ENCODE measurements at regions of chr10 and their contacts with region 1.

Region 1: GRCh38 chr10:79301754-79302530 is 45.3 kb upstream of the PPIF start:
- DNase-seq: no peak
- H3K4me3 ChIP-seq: no peak overlapping the region
- H3K27me3 ChIP-seq: no peaks in the 10 kb centered on the region
- CTCF ChIP-seq: no peak

Region 2: DNA sequence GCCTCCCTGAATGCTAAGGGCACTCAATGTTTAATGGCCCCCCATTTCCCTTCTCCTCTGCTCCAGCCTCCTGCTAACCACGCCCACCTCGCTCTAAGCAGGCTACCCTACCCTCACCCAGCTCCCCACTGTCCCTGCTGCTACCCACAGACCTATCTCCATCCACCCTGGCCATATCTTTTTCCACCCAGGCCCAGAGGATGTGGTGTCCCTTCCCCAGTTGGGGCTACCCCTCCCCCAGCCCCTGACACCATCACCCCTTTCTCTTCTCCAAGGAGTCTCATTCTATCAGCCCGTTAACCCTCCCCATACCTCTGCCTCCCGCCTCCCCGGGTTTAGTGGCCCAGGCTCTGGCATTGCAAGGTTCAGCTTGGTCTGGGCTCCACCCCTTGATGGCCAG is 16.4 kb after region 1 on chr10:
- CTCF ChIA-PET with region 1: interaction called, 3 read pairs
- POLR2A ChIA-PET with region 1: interaction called, 16 read pairs
- DNase-seq: no peak
- H3K4me3 ChIP-seq: no peak overlapping the region
- H3K27me3 ChIP-seq: no peaks in the 10 kb centered on the region
- CTCF ChIP-seq: no peak